ENCODE measurements at regions of chr10 and their contacts with region 1.

Region 1: DNA sequence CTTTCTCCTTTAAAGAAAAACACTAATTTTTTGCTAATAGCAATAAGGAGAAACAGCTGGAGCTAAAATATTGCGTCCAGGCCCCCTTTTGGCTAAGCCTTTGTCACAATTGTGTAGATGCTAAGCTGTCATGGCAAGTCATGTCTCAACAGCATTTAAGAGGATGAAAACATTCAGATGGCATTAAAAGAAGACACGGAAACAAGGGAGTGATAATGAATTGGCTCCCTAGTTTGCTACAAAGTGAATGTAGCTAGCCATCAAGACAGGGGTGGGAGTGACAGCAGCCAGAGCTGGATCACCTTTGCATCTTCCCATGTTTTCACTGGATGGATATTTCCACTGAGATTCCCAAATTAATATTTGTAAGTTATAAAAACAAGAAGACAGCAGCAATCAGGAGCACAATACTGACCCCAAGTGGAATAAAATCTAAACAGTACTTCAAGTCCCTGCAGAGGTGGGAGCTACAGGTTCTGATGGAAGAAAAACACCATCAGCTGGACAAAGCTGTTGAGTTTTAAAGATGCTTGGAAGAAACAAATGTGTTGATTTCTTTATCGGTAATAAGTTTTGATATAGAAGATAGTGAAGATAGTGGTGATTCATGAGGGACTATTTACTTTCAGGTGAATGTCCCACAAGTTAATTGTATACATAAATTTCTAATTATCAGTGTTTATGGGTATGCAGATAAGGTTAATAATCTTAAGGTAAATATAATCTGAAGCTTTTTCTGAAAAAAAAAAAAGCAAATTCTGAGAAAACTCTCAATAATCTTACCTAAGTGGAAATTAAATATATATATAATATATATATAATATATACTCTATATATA is 129.4 kb downstream of the SLC16A9 start:
- DNase-seq: no peak
- ATAC-seq: no peak
- H3K4me3 ChIP-seq: no peak overlapping the region
- H3K27ac ChIP-seq: no peak overlapping the region
- H3K4me1 ChIP-seq: no peaks in the 10 kb centered on the region
- H3K27me3 ChIP-seq: no peaks in the 10 kb centered on the region
- CTCF ChIP-seq: peak; percentile 56

Region 2: DNA sequence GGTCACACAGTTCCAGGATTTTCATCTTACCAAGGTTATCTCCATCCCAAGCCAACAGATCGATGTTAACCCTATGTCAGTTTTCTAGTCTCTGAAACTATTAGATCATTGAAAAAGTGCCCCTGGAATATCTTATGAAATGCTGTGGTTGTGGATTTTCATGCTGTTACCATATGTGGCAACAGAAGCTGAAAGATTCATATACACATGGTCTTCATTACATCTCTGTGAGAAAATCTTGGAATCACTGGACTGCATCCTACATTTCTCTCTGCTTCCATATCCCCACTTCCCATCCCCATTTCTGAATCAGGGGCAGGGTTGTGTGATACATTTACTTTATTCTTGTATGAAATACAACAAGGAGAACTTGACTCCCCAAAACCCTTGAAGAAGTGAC is 16.7 kb before region 1 on chr10:
- intact Hi-C with region 1: loop called in 1 of 2 experiments (anchors 1 kb)
- DNase-seq: no peak
- ATAC-seq: no peak
- H3K4me3 ChIP-seq: no peak overlapping the region
- H3K27ac ChIP-seq: no peak overlapping the region
- H3K4me1 ChIP-seq: no peaks in the 10 kb centered on the region
- H3K27me3 ChIP-seq: peaks cover 0 to 6% (median 0%) of the 10 kb centered on the region in 3 donors
- CTCF ChIP-seq: no peak

Region 3: GRCh38 chr10:59678884-59679301 is 98.6 kb after region 1 on chr10:
- intact Hi-C with region 1: no loop called
- DNase-seq: no peak
- ATAC-seq: no peak
- H3K4me3 ChIP-seq: no peak overlapping the region
- H3K27ac ChIP-seq: no peak overlapping the region
- H3K4me1 ChIP-seq: peaks cover 10% of the 10 kb centered on the region
- H3K27me3 ChIP-seq: no peaks in the 10 kb centered on the region
- CTCF ChIP-seq: no peak

Measured in psoas muscle (tissue), 8 donors.